ENCODE measurements at regions of chr1 and their contacts with region 1.

Region 1: GRCh38 chr1:240732390-240732789 is 120.4 kb upstream of the GREM2 start:
- DNase-seq: no peak
- H3K4me3 ChIP-seq: no peak overlapping the region
- H3K27ac ChIP-seq: no peak overlapping the region
- H3K4me1 ChIP-seq: no peaks in the 10 kb centered on the region
- H3K27me3 ChIP-seq: no peaks in the 10 kb centered on the region
- CTCF ChIP-seq: peak; percentile 9 to 66 (median 36)
- EP300 ChIP-seq: no peak
- POLR2A ChIP-seq: no peak

Region 2: GRCh38 chr1:240465531-240465940 is 266.9 kb before region 1 on chr1:
- intact Hi-C with region 1: no loop called
- DNase-seq: no peak
- H3K4me3 ChIP-seq: peak overlapping the region in 3 of 4 donors; percentile 8 to 25 (median 23)
- H3K27ac ChIP-seq: no peak overlapping the region
- H3K4me1 ChIP-seq: peaks cover 0 to 15% (median 14%) of the 10 kb centered on the region in 4 donors
- H3K27me3 ChIP-seq: no peaks in the 10 kb centered on the region
- CTCF ChIP-seq: no peak
- EP300 ChIP-seq: no peak
- POLR2A ChIP-seq: no peak

Region 3: GRCh38 chr1:240946926-240947325 is 214.5 kb after region 1 on chr1:
- intact Hi-C with region 1: loop called (anchors 5 kb)
- DNase-seq: no peak
- H3K4me3 ChIP-seq: no peak overlapping the region
- H3K27ac ChIP-seq: no peak overlapping the region
- H3K4me1 ChIP-seq: no peaks in the 10 kb centered on the region
- H3K27me3 ChIP-seq: no peaks in the 10 kb centered on the region
- CTCF ChIP-seq: peak in 3 of 4 experiments; percentile 19 to 51 (median 38)
- EP300 ChIP-seq: no peak
- POLR2A ChIP-seq: no peak